ENCODE measurements at regions of chr3 and their contacts with region 1.

Region 1: DNA sequence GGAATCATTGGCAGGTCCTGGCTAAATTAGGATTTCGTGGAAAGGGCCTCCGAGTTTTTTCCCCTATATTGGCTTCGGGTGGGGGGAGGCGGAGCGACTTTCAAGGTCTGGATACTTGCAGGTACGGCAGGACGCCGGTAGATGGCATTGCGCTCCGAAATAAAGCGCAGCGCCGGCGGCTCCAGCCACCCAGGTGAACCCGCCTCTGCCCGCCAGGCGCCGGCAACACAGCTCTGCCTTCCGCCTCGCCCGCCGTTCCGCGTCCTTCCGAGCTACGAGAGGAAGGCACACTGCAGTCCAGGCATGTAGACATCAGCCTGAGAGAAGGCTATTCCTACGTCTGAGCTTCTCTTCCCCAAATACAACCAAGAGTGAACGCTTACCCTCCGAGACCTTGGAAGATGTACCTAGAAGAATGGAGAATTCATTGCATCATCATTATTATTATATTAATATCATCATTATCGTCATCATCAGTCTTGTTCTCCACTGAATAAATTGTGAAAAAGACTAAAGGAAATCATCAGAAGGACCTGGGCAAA is 514.1 kb downstream of the MECOM start:
- DNase-seq: peak; percentile 80 to 89
- H3K4me3 ChIP-seq: peak overlapping the region; percentile 29
- H3K4me3 Mint-ChIP-seq: peak overlapping the region; percentile 84
- H3K27ac Mint-ChIP-seq: no peak overlapping the region
- H3K4me1 ChIP-seq: no peaks in the 10 kb centered on the region
- H3K4me1 Mint-ChIP-seq: peaks cover 11% of the 10 kb centered on the region
- H3K27me3 ChIP-seq: no peaks in the 10 kb centered on the region
- H3K27me3 Mint-ChIP-seq: no peaks in the 10 kb centered on the region
- CTCF ChIP-seq: peak; percentile 81 to 87

Region 2: GRCh38 chr3:169173244-169174015 is 24.0 kb after region 1 on chr3:
- CTCF ChIA-PET with region 1: interaction called, 10 read pairs
- POLR2A ChIA-PET with region 1: no interaction called
- intact Hi-C with region 1: no loop called
- DNase-seq: peak in 1 of 2 experiments; percentile 32
- H3K4me3 ChIP-seq: no peak overlapping the region
- H3K4me3 Mint-ChIP-seq: no peak overlapping the region
- H3K27ac Mint-ChIP-seq: no peak overlapping the region
- H3K4me1 ChIP-seq: peaks cover 8% of the 10 kb centered on the region; the same call in 1 of the 2 replicates
- H3K4me1 Mint-ChIP-seq: peaks cover 16% of the 10 kb centered on the region
- H3K27me3 ChIP-seq: no peaks in the 10 kb centered on the region
- H3K27me3 Mint-ChIP-seq: no peaks in the 10 kb centered on the region
- CTCF ChIP-seq: no peak

Region 3: GRCh38 chr3:169269005-169269404 is 119.6 kb after region 1 on chr3:
- CTCF ChIA-PET with region 1: no interaction called
- POLR2A ChIA-PET with region 1: no interaction called
- intact Hi-C with region 1: loop called (anchors 1 kb)
- DNase-seq: peak in 1 of 2 experiments; percentile 4
- H3K4me3 ChIP-seq: peak overlapping the region; percentile 17; the same call in 1 of the 2 replicates
- H3K4me3 Mint-ChIP-seq: peak overlapping the region; percentile 66
- H3K27ac Mint-ChIP-seq: peak overlapping the region; percentile 77
- H3K4me1 ChIP-seq: peaks cover 31% of the 10 kb centered on the region
- H3K4me1 Mint-ChIP-seq: peaks cover 22% of the 10 kb centered on the region
- H3K27me3 ChIP-seq: no peaks in the 10 kb centered on the region
- H3K27me3 Mint-ChIP-seq: no peaks in the 10 kb centered on the region
- CTCF ChIP-seq: no peak

Region 4: DNA sequence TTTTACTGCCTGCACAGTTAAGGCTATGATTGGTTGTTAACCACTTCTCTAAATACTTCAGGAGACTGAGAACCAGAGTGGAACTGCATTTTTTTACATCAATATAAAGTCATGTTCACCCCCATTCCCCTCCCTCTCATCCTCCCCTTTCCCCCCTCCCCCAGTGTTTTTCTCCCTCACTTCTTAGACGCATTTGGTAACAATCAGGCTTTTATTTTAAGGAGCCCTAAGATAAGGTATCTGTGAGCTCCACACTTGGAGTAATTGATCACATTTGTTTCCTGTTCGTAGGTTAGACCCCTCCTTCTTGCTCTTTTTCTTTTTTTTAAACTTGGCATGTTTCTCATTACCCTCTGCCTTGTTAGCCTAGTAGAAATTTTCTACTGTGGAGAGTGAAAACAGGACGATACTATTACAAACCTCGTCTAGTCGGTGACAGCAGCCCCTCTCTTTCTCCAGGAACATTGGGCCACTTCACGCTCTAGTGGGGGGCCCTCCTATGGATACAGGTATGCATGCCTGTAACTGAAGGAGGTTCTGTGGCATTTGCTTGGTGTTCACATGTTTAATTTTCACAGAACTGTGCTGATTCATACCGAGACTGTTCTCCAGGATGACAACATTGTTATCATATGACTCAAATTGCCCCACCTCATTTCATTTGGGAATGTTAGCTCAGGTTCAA is 199.7 kb after region 1 on chr3:
- CTCF ChIA-PET with region 1: interaction called, 3 read pairs
- POLR2A ChIA-PET with region 1: no interaction called
- intact Hi-C with region 1: loop called (anchors 1 kb)
- DNase-seq: no peak
- H3K4me3 ChIP-seq: no peak overlapping the region
- H3K4me3 Mint-ChIP-seq: peak overlapping the region; percentile 55
- H3K27ac Mint-ChIP-seq: peak overlapping the region; percentile 39
- H3K4me1 ChIP-seq: peaks cover 18% of the 10 kb centered on the region
- H3K4me1 Mint-ChIP-seq: peaks cover 2% of the 10 kb centered on the region
- H3K27me3 ChIP-seq: no peaks in the 10 kb centered on the region
- H3K27me3 Mint-ChIP-seq: no peaks in the 10 kb centered on the region
- CTCF ChIP-seq: no peak

Region 5: DNA sequence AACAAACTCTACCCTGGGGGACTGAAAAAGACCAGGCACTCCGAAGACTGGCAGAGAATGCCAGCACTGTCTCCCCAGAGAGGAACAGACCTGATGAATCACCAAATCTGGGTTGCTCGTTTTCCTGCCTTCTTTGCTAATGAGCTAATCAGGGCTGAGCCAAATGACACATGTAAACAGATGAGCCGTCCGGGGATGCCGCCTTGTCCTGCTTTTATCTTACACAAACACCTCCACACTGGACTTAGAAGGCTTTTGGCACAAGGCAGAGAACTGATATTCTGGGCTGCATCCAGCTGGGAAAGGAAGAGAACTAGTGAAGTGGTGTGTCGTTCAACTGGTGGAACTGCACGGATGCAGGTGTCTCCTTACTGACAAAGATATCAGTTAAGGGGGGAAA is 426.0 kb after region 1 on chr3:
- CTCF ChIA-PET with region 1: no interaction called
- POLR2A ChIA-PET with region 1: no interaction called
- intact Hi-C with region 1: loop called (anchors 5 kb)
- DNase-seq: no peak
- H3K4me3 ChIP-seq: no peak overlapping the region
- H3K4me3 Mint-ChIP-seq: no peak overlapping the region
- H3K27ac Mint-ChIP-seq: no peak overlapping the region
- H3K4me1 ChIP-seq: no peaks in the 10 kb centered on the region
- H3K4me1 Mint-ChIP-seq: no peaks in the 10 kb centered on the region
- H3K27me3 ChIP-seq: no peaks in the 10 kb centered on the region
- H3K27me3 Mint-ChIP-seq: no peaks in the 10 kb centered on the region
- CTCF ChIP-seq: no peak

Region 6: GRCh38 chr3:169668957-169669681 is 519.7 kb after region 1 on chr3:
- CTCF ChIA-PET with region 1: interaction called, 43 read pairs
- POLR2A ChIA-PET with region 1: no interaction called
- intact Hi-C with region 1: loop called (anchors 1 kb)
- DNase-seq: peak; percentile 67 to 80
- H3K4me3 ChIP-seq: peak overlapping the region; percentile 51
- H3K4me3 Mint-ChIP-seq: peak overlapping the region; percentile 74
- H3K27ac Mint-ChIP-seq: no peak overlapping the region
- H3K4me1 ChIP-seq: no peaks in the 10 kb centered on the region
- H3K4me1 Mint-ChIP-seq: peaks cover 7% of the 10 kb centered on the region
- H3K27me3 ChIP-seq: peaks cover 1% of the 10 kb centered on the region
- H3K27me3 Mint-ChIP-seq: peaks cover 22% of the 10 kb centered on the region
- CTCF ChIP-seq: peak; percentile 77 to 91

Measured in Caco-2 (cell line).